MCF 10A (cell line): ENCODE measurements at regions of chr21 and their contacts with region 1.

Region 1: GRCh38 chr21:46323227-46324128 is at the start of gene C21orf58:
- DNase-seq: peak; percentile 97
- H3K4me3 Mint-ChIP-seq: peak within 1 kb of the TSS; percentile 86
- H3K27ac Mint-ChIP-seq: peak within 1 kb of the TSS; percentile 94
- H3K4me1 Mint-ChIP-seq: peaks cover 18% of the 10 kb centered on the region
- H3K27me3 Mint-ChIP-seq: no peaks in the 10 kb centered on the region
- CTCF ChIP-seq: no peak
- total RNA-seq, gene C21orf58: 6.4 and 7.8 TPM in 2 replicates

Region 2: GRCh38 chr21:46285761-46286496 is 37.5 kb before region 1 on chr21 and contains the start of gene YBEY:
- CTCF ChIA-PET with region 1: interaction called, 11 read pairs
- POLR2A ChIA-PET with region 1: interaction called, 20 read pairs
- intact Hi-C with region 1: loop called (anchors 1 kb)
- DNase-seq: peak; percentile 89
- H3K4me3 Mint-ChIP-seq: peak within 1 kb of the TSS; percentile 82
- H3K27ac Mint-ChIP-seq: peak within 1 kb of the TSS; percentile 74
- H3K4me1 Mint-ChIP-seq: peaks cover 15% of the 10 kb centered on the region
- H3K27me3 Mint-ChIP-seq: no peaks in the 10 kb centered on the region
- CTCF ChIP-seq: peak; percentile 20
- total RNA-seq, gene YBEY: 26.7 and 29.9 TPM in 2 replicates

Region 3: DNA sequence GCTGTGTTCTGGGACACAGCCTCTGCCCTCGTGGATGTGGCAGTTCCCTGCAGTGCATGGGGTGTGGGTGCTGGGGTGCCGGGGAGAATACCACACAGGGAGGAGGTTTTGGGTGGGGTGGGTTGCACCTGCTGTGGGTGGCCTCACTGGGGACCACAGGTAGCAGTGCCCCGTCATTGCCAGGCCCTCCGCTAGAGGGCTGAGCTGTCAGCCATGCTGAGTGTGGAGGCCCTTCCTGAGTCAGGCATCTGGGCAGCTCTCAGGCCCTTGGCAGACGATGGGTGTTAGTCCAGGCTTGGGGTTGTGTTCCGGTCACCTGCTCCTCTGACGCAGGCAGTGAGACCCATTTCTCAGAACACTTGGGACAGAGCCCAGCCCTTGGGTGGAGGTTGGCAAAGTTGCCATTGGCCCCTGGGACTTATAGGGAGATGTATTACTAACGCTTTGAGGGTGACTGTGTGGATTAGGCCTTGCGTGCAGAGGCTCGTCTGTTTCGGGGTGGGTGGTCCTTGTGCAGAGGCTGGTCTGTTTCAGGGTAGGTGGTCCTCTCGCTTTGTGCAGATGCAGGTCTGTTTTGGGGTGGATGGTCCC is 24.4 kb after region 1 on chr21:
- CTCF ChIA-PET with region 1: no interaction called
- POLR2A ChIA-PET with region 1: interaction called, 13 read pairs
- intact Hi-C with region 1: no loop called
- DNase-seq: peak; percentile 89
- H3K4me3 Mint-ChIP-seq: no peak overlapping the region
- H3K27ac Mint-ChIP-seq: peak overlapping the region; percentile 27
- H3K4me1 Mint-ChIP-seq: no peaks in the 10 kb centered on the region
- H3K27me3 Mint-ChIP-seq: no peaks in the 10 kb centered on the region
- CTCF ChIP-seq: peak; percentile 6